CD4-positive, alpha-beta memory T cell (primary cell): ENCODE measurements at regions of chr10 and their contacts with region 1.

Region 1: GRCh38 chr10:100969187-100970075 is at the start of gene SEMA4G:
- DNase-seq: peak; percentile 24 to 49 (median 32)
- H3K4me3 ChIP-seq: peak within 1 kb of the TSS in 1 of 2 donors; percentile 58
- H3K4me3 Mint-ChIP-seq: peak within 1 kb of the TSS; percentile 66 to 81 (median 76)
- H3K27ac ChIP-seq: no peak within 1 kb of the TSS
- H3K27ac Mint-ChIP-seq: peak within 1 kb of the TSS in 4 of 7 donors; percentile 43 to 70 (median 59)
- H3K4me1 ChIP-seq: peaks cover 18% of the 10 kb centered on the region
- H3K4me1 Mint-ChIP-seq: peaks cover 4 to 23% (median 14%) of the 10 kb centered on the region in 4 donors
- H3K27me3 ChIP-seq: no peaks in the 10 kb centered on the region
- H3K27me3 Mint-ChIP-seq: no peaks in the 10 kb centered on the region
- total RNA-seq, gene SEMA4G: 1.1 to 1.4 TPM

Region 2: GRCh38 chr10:100890673-100891317 is 78.6 kb before region 1 on chr10:
- CTCF ChIA-PET with region 1: no interaction called
- POLR2A ChIA-PET with region 1: no interaction called
- intact Hi-C with region 1: no loop called
- DNase-seq: no peak
- H3K4me3 ChIP-seq: no peak overlapping the region
- H3K4me3 Mint-ChIP-seq: peak overlapping the region in 1 of 8 donors; percentile 27
- H3K27ac ChIP-seq: no peak overlapping the region
- H3K27ac Mint-ChIP-seq: no peak overlapping the region
- H3K4me1 ChIP-seq: no peaks in the 10 kb centered on the region
- H3K4me1 Mint-ChIP-seq: peaks cover 4 to 7% (median 6%) of the 10 kb centered on the region in 4 donors
- H3K27me3 ChIP-seq: no peaks in the 10 kb centered on the region
- H3K27me3 Mint-ChIP-seq: peaks cover 19 to 25% of the 10 kb centered on the region in 2 donors

Region 3: GRCh38 chr10:101012525-101013364 is 43.3 kb after region 1 on chr10:
- CTCF ChIA-PET with region 1: interaction called, 60 read pairs
- POLR2A ChIA-PET with region 1: interaction called, 3 read pairs
- intact Hi-C with region 1: loop called (anchors 2 kb)
- DNase-seq: peak; percentile 51 to 72 (median 65)
- H3K4me3 ChIP-seq: no peak overlapping the region
- H3K4me3 Mint-ChIP-seq: no peak overlapping the region
- H3K27ac ChIP-seq: no peak overlapping the region
- H3K27ac Mint-ChIP-seq: peak overlapping the region in 3 of 7 donors; percentile 2 to 67 (median 61)
- H3K4me1 ChIP-seq: peaks cover 19% of the 10 kb centered on the region
- H3K4me1 Mint-ChIP-seq: peaks cover 10 to 15% (median 13%) of the 10 kb centered on the region in 4 donors
- H3K27me3 ChIP-seq: peaks cover 11% of the 10 kb centered on the region
- H3K27me3 Mint-ChIP-seq: peaks cover 20 to 23% of the 10 kb centered on the region in 2 donors

Region 4: DNA sequence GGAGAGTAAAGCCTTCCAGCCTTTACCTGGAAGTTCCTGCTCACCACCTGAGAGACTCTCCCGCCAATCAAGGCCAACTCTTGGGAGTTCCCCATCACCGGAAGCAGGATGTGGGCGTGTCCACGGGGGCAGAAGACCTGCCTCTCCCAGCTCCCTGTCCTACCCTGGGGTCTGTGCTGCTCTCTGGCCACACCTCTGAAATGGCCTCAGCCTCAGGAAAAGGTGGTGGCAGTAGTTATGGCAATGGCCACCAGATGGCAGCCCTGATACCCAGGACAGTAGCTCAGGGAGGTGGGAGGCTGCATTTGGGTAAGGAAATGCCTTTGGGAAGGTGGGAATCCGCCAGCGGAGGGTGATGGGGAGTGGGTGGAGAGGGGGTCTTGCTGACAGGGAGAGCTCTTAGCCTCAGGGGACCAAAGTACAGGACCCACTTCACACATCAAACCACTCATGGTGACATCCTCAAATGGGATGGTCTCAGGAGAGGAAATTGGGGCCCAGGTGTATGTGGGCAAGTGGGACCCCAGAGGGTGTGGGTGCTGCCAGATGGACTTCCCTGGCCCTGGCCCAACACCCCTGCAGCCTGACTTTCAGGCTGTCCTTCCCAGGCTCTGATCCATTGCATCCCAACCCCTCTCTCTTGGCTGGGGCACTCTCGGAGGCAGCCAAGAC is 126.2 kb after region 1 on chr10:
- CTCF ChIA-PET with region 1: no interaction called
- POLR2A ChIA-PET with region 1: no interaction called
- intact Hi-C with region 1: no loop called
- DNase-seq: peak; percentile 60 to 74 (median 64)
- H3K4me3 ChIP-seq: no peak overlapping the region
- H3K4me3 Mint-ChIP-seq: no peak overlapping the region
- H3K27ac ChIP-seq: no peak overlapping the region
- H3K27ac Mint-ChIP-seq: no peak overlapping the region
- H3K4me1 ChIP-seq: no peaks in the 10 kb centered on the region
- H3K4me1 Mint-ChIP-seq: no peaks in the 10 kb centered on the region
- H3K27me3 ChIP-seq: peaks cover 2% of the 10 kb centered on the region
- H3K27me3 Mint-ChIP-seq: peaks cover 34 to 53% of the 10 kb centered on the region in 2 donors